H1 (cell line): ENCODE measurements at regions of chr12 and their contacts with region 1.

Region 1: GRCh38 chr12:127677537-127678131 is 589.3 kb upstream of the TMEM132C start:
- DNase-seq: peak; percentile 69 to 84
- H3K4me3 ChIP-seq: no peak overlapping the region
- H3K27ac ChIP-seq: no peak overlapping the region
- H3K4me1 ChIP-seq: peaks cover 0 to 2% (median 0%) of the 10 kb centered on the region in 4 experiments; a peak in 2 of 7 replicates
- H3K27me3 ChIP-seq: no peaks in the 10 kb centered on the region
- CTCF ChIP-seq: peak; percentile 79 to 93 (median 81)
- EP300 ChIP-seq: no peak
- POLR2A ChIP-seq: no peak
- RAD21 ChIP-seq: peak; percentile 93 to 94

Region 2: GRCh38 chr12:127455347-127456265 is 222.0 kb before region 1 on chr12:
- CTCF ChIA-PET with region 1: interaction called, 10 read pairs
- POLR2A ChIA-PET with region 1: no interaction called
- DNase-seq: peak in 1 of 2 experiments; percentile 90
- H3K4me3 ChIP-seq: peak overlapping the region; percentile 45 to 76 (median 56)
- H3K27ac ChIP-seq: no peak overlapping the region
- H3K4me1 ChIP-seq: peaks cover 0 to 5% (median 0%) of the 10 kb centered on the region in 4 experiments; a peak in 3 of 7 replicates
- H3K27me3 ChIP-seq: peaks cover 0 to 23% (median 16%) of the 10 kb centered on the region in 4 experiments; a peak in 6 of 7 replicates
- CTCF ChIP-seq: peak; percentile 48 to 62 (median 51)
- EP300 ChIP-seq: no peak
- POLR2A ChIP-seq: no peak
- RAD21 ChIP-seq: peak; percentile 28 to 49; a peak in 3 of 4 replicates

Region 3: DNA sequence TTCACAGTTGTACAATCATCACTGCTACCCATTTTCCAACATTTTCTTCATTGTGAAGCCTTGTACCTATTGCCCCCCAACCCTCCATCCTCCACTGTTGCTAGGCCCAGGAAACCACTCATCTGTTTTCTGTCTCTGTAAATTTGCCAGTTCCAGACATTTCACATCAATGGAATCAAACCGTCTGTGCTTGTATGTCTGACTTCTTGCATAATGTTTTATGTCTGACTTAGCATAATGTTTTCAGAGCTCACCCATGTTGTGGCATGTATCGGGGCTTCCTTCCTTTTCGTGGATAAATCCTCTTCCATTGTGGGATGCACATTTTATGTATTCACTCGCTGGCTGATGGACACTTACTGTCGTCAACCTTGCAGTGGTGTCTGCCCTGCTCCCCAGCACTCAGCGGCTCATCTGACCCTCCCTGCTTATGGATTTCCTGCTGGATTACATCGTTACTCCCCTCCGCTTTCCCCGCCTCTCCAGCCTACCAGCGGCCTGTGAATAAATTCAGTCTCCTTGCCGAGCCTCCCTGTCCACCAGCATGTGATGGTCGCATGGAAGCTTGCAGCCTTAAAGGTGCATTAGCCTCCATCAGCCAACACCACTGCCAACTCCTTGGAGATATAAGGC is 138.3 kb before region 1 on chr12:
- CTCF ChIA-PET with region 1: interaction called, 14 read pairs
- POLR2A ChIA-PET with region 1: no interaction called
- DNase-seq: no peak
- H3K4me3 ChIP-seq: no peak overlapping the region
- H3K27ac ChIP-seq: no peak overlapping the region
- H3K4me1 ChIP-seq: peaks cover 0 to 11% (median 2%) of the 10 kb centered on the region in 4 experiments; a peak in 2 of 7 replicates
- H3K27me3 ChIP-seq: no peaks in the 10 kb centered on the region
- CTCF ChIP-seq: no peak
- EP300 ChIP-seq: no peak
- POLR2A ChIP-seq: no peak
- RAD21 ChIP-seq: no peak

Region 4: GRCh38 chr12:127594351-127594970 is 83.2 kb before region 1 on chr12:
- CTCF ChIA-PET with region 1: interaction called, 14 read pairs
- POLR2A ChIA-PET with region 1: no interaction called
- DNase-seq: peak; percentile 38 to 57
- H3K4me3 ChIP-seq: peak overlapping the region in 1 of 4 experiments; percentile 0; a peak in 1 of 8 replicates
- H3K27ac ChIP-seq: peak overlapping the region; percentile 83
- H3K4me1 ChIP-seq: peaks cover 7 to 15% (median 12%) of the 10 kb centered on the region in 4 experiments; a peak in 6 of 7 replicates
- H3K27me3 ChIP-seq: no peaks in the 10 kb centered on the region
- CTCF ChIP-seq: no peak
- EP300 ChIP-seq: no peak
- POLR2A ChIP-seq: peak in 1 of 2 experiments; percentile 48; a peak in 1 of 3 replicates
- RAD21 ChIP-seq: peak in 1 of 2 experiments; percentile 23; a peak in 1 of 4 replicates

Region 5: GRCh38 chr12:127667131-127667685 is 10.4 kb before region 1 on chr12:
- CTCF ChIA-PET with region 1: interaction called, 19 read pairs
- POLR2A ChIA-PET with region 1: no interaction called
- DNase-seq: no peak
- H3K4me3 ChIP-seq: no peak overlapping the region
- H3K27ac ChIP-seq: no peak overlapping the region
- H3K4me1 ChIP-seq: peaks cover 0 to 4% (median under 1%) of the 10 kb centered on the region in 4 experiments; a peak in 2 of 7 replicates
- H3K27me3 ChIP-seq: peaks cover 0 to 1% (median 0%) of the 10 kb centered on the region in 4 experiments; a peak in 2 of 7 replicates
- CTCF ChIP-seq: no peak
- EP300 ChIP-seq: no peak
- POLR2A ChIP-seq: no peak
- RAD21 ChIP-seq: no peak

Region 6: GRCh38 chr12:127690161-127690560 is 12.5 kb after region 1 on chr12:
- CTCF ChIA-PET with region 1: interaction called, 10 read pairs
- POLR2A ChIA-PET with region 1: no interaction called
- DNase-seq: no peak
- H3K4me3 ChIP-seq: no peak overlapping the region
- H3K27ac ChIP-seq: no peak overlapping the region
- H3K4me1 ChIP-seq: peaks cover 0 to 4% (median 2%) of the 10 kb centered on the region in 4 experiments; a peak in 3 of 7 replicates
- H3K27me3 ChIP-seq: no peaks in the 10 kb centered on the region
- CTCF ChIP-seq: peak in 2 of 3 experiments; percentile 4 to 14; a peak in 2 of 4 replicates
- EP300 ChIP-seq: no peak
- POLR2A ChIP-seq: no peak
- RAD21 ChIP-seq: peak; percentile 48 to 57

Region 7: GRCh38 chr12:127809275-127809674 is 131.6 kb after region 1 on chr12:
- CTCF ChIA-PET with region 1: no interaction called
- POLR2A ChIA-PET with region 1: no interaction called
- DNase-seq: no peak
- H3K4me3 ChIP-seq: no peak overlapping the region
- H3K27ac ChIP-seq: no peak overlapping the region
- H3K4me1 ChIP-seq: peaks cover 0 to 4% (median 2%) of the 10 kb centered on the region in 4 experiments; a peak in 1 of 7 replicates
- H3K27me3 ChIP-seq: no peaks in the 10 kb centered on the region
- CTCF ChIP-seq: no peak
- EP300 ChIP-seq: no peak
- POLR2A ChIP-seq: no peak
- RAD21 ChIP-seq: no peak

Region 8: GRCh38 chr12:127925971-127926370 is 248.3 kb after region 1 on chr12:
- CTCF ChIA-PET with region 1: interaction called, 12 read pairs
- POLR2A ChIA-PET with region 1: no interaction called
- DNase-seq: peak; percentile 7 to 49
- H3K4me3 ChIP-seq: no peak overlapping the region
- H3K27ac ChIP-seq: no peak overlapping the region
- H3K4me1 ChIP-seq: no peaks in the 10 kb centered on the region
- H3K27me3 ChIP-seq: no peaks in the 10 kb centered on the region
- CTCF ChIP-seq: peak; percentile 64 to 76 (median 76)
- EP300 ChIP-seq: no peak
- POLR2A ChIP-seq: no peak
- RAD21 ChIP-seq: peak; percentile 90 to 95